ENCODE measurements at regions of chr14 and their contacts with region 1.

Region 1: DNA sequence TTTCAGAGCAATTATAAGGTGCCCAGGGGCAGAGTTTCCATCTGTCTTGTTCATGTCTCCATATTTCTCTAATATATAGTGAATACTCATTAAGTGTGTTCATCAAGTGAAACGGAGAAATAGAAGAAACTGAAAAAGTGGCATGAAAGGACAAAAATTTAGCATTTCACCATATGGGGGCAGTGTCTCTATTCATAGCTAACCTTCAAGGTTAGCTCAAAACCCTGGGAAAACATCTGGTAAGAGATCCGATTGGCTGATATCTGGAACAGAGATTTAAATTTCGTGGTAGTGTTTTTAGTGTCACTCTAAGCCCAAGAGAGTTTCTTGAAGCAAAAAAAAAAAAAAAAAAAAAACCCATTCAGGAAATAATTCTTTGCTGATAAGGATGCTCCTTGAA is 367.5 kb downstream of the DAD1 start:
- DNase-seq: no peak
- H3K4me3 ChIP-seq: no peak overlapping the region
- CTCF ChIP-seq: peak; percentile 22

Region 2: DNA sequence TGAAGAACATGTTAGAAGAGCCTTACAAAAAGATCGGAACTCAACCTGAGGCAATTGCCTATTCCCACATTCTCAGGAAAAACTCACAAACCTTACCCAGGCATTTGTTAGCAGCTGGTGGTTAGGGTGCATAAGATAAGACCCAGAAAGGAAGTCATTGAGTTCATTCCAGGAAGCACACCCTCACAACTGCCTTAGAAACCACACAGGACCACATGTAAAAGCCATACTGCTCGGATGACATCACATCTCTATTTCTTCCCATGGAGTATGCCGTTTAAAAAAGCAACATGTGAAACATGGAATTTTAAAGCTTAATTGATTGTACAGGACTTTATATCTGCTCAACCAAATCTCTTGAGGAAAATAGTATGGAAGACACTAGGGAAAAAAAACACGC is 43.6 kb before region 1 on chr14:
- CTCF ChIA-PET with region 1: no interaction called
- POLR2A ChIA-PET with region 1: no interaction called
- DNase-seq: no peak
- H3K4me3 ChIP-seq: no peak overlapping the region
- CTCF ChIP-seq: no peak

Region 3: DNA sequence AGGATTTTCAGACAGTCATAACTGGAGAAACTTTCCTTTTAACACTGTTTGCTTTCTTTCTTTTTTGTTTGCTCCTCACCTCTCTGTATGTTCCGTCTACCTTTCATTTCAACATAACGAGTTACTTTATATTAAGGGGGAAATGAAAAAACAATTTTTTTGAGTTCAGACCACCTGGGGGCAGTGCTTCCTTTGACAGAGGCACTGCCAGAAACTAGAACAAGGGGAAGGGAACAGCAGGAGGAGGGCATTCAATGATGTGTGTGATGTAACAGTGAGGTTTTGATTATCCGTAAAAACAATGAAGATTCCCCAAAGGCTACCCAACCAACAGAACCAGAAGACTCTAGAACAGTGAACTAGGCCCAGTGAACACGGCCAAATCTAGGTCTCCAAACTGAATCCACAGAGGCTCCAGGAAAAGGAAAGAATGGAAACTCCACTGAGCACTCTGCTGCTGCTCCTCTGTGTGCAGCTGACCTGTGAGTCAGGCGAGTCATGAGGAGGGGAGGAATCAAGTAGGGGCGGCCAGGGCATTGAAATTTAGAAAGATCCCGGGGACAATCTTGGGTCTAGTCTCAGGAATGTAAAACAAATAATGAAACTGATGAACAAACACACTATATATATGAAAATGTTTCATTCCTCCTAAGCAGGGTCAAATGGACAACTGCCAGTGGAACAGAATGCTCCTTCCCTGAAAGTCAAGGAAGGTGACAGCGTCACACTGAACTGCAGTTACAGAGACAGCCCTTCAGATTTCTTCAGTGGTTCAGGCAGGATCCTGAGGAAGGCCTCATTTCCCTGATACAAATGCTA is 44.0 kb after region 1 on chr14:
- CTCF ChIA-PET with region 1: interaction called, 13 read pairs
- POLR2A ChIA-PET with region 1: no interaction called
- DNase-seq: no peak
- H3K4me3 ChIP-seq: no peak overlapping the region
- CTCF ChIP-seq: no peak

Region 4: GRCh38 chr14:22296722-22297121 is 75.2 kb after region 1 on chr14:
- CTCF ChIA-PET with region 1: interaction called, 12 read pairs
- POLR2A ChIA-PET with region 1: no interaction called
- DNase-seq: no peak
- H3K4me3 ChIP-seq: no peak overlapping the region
- CTCF ChIP-seq: no peak

Region 5: GRCh38 chr14:22375321-22375930 is 153.9 kb after region 1 on chr14:
- CTCF ChIA-PET with region 1: interaction called, 35 read pairs
- POLR2A ChIA-PET with region 1: no interaction called
- DNase-seq: no peak
- H3K4me3 ChIP-seq: no peak overlapping the region
- CTCF ChIP-seq: peak; percentile 39

Region 6: GRCh38 chr14:22386924-22387775 is 165.6 kb after region 1 on chr14:
- CTCF ChIA-PET with region 1: interaction called, 25 read pairs
- POLR2A ChIA-PET with region 1: no interaction called
- DNase-seq: no peak
- H3K4me3 ChIP-seq: peak overlapping the region; percentile 13
- CTCF ChIP-seq: peak; percentile 68

Region 7: GRCh38 chr14:22510527-22511110 is 289.1 kb after region 1 on chr14:
- CTCF ChIA-PET with region 1: no interaction called
- POLR2A ChIA-PET with region 1: no interaction called
- DNase-seq: peak; percentile 79
- H3K4me3 ChIP-seq: no peak overlapping the region
- CTCF ChIP-seq: no peak